AG04450 (cell line): ENCODE measurements at regions of chr15 and their contacts with region 1.

Region 1: DNA sequence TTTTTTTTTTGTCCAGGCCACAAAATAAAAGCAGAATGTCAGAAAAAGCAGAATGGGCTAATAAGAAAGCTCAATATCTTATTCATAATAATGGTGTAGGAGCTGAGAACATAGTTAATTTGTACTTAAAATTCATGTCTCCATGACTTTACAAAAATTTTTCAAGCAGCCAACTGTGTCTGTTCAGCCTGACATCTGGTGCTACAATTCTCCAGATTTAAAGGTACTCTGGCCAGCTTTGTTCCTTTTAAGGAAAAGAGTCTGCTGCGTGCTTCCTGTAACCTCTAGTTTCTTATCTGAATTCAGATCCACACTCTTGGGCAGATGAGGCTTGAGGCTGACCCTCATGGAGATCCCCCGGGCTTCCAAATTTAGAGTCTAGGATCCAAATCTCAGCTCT is 8.7 kb upstream of the RFX7 start:
- DNase-seq: no peak
- H3K4me3 ChIP-seq: no peak overlapping the region
- H3K27ac ChIP-seq: no peak overlapping the region
- H3K27me3 ChIP-seq: no peaks in the 10 kb centered on the region
- CTCF ChIP-seq: no peak

Region 2: DNA sequence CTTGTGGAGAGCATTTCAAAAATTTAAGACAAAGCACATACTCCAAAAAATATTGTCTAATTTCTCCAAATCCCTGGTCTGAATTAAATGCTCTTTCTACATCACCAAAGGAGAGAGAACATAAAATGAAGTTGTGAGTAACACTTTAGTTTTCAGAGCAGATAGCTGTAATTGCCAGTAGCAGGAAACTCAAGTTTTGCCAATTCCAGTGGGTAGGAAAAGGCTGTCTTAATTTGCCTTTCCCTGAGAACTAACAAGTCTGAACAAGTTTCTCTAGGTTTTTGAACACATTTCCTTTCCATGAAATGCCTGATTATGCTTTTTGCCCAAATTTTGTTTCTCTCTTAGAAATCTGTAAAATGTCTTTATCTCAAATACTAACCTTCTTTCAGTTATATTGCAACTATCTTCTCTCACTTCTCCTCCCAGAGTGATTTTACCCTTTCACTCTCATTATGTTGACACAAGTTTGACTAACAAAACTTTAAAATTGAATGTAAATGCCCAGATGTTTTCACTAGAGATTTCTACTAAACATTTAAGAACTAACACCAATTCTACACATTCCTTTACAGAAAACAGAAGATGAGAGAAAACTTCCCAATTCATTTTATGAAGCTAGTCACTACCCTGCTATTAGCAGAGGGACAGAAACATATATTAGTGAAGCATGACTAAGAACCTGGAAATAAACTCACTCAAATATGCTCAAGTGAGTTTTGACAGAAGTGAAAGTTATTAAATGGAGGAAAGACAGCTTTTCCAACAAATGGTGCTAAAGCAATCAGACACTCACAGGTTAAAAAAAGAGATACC is 47.1 kb before region 1 on chr15:
- CTCF ChIA-PET with region 1: no interaction called
- POLR2A ChIA-PET with region 1: no interaction called
- DNase-seq: no peak
- H3K4me3 ChIP-seq: no peak overlapping the region
- H3K27ac ChIP-seq: no peak overlapping the region
- H3K27me3 ChIP-seq: no peaks in the 10 kb centered on the region
- CTCF ChIP-seq: no peak

Region 3: GRCh38 chr15:56428821-56429458 is 176.6 kb after region 1 on chr15:
- CTCF ChIA-PET with region 1: interaction called, 62 read pairs
- POLR2A ChIA-PET with region 1: no interaction called
- DNase-seq: peak; percentile 1
- H3K4me3 ChIP-seq: no peak overlapping the region
- H3K27ac ChIP-seq: no peak overlapping the region
- H3K27me3 ChIP-seq: no peaks in the 10 kb centered on the region
- CTCF ChIP-seq: peak; percentile 55